ENCODE measurements at regions of chr6 and their contacts with region 1.

Region 1: GRCh38 chr6:30556066-30556905 is at the start of gene GNL1:
- DNase-seq: peak; percentile 95 to 99 (median 99)
- ATAC-seq: peak; percentile 94
- H3K4me3 ChIP-seq: peak within 1 kb of the TSS; percentile 97
- H3K4me3 Mint-ChIP-seq: peak within 1 kb of the TSS; percentile 92 to 100 (median 98)
- H3K27ac ChIP-seq: peak within 1 kb of the TSS; percentile 97
- H3K27ac Mint-ChIP-seq: peak within 1 kb of the TSS; percentile 98 to 100 (median 99)
- H3K4me1 ChIP-seq: peaks cover 8 to 19% of the 10 kb centered on the region in 2 donors
- H3K4me1 Mint-ChIP-seq: peaks cover 25 to 58% (median 45%) of the 10 kb centered on the region in 7 donors
- H3K27me3 ChIP-seq: no peaks in the 10 kb centered on the region
- H3K27me3 Mint-ChIP-seq: no peaks in the 10 kb centered on the region
- total RNA-seq, gene GNL1: 56.0 to 190 (median 73.1) TPM

Region 2: DNA sequence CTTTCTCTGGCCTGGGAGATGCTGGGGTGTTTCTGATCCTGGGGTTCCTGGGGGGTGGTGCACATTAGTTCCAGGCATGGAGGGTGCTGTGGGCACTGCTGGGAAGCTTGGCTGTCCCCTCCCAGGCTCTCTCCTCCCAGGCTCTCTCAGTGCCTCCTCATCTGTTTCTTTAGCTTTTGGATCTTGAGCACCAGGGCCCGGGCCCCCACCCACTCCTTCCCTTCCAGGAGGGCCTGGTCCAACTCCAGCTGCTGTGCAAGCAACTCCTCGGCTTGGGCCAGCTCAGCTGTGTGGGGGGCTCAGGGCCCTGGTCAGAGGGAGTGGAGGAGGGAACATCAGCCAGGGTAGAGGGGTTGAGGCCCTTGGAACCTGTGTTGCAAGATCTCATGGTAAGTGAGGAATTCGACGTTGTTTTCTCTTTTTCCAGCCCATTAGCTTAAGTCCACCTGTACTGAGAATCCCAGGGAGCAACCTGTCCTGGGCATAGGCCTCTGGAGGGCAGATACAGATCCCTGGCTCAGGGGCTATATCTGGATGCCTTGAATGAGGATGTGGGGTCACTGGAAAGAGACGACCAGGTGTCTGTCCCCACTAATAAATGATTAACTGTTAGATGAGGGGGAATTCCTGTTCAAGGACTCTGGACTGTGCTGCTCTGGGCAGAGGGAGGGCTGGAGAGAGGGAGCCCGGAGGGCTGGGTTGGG is 648.5 kb before region 1 on chr6:
- CTCF ChIA-PET with region 1: no interaction called
- POLR2A ChIA-PET with region 1: no interaction called
- intact Hi-C with region 1: no loop called
- DNase-seq: no peak
- ATAC-seq: no peak
- H3K4me3 ChIP-seq: no peak overlapping the region
- H3K4me3 Mint-ChIP-seq: no peak overlapping the region
- H3K27ac ChIP-seq: no peak overlapping the region
- H3K27ac Mint-ChIP-seq: no peak overlapping the region
- H3K4me1 ChIP-seq: no peaks in the 10 kb centered on the region
- H3K4me1 Mint-ChIP-seq: peaks cover 0 to 3% (median 0%) of the 10 kb centered on the region in 7 donors
- H3K27me3 ChIP-seq: no peaks in the 10 kb centered on the region
- H3K27me3 Mint-ChIP-seq: peaks cover 0 to 35% (median 13%) of the 10 kb centered on the region in 5 donors

Region 3: GRCh38 chr6:30212865-30213666 is 343.2 kb before region 1 on chr6 and contains the start of gene TRIM26:
- CTCF ChIA-PET with region 1: no interaction called
- POLR2A ChIA-PET with region 1: no interaction called
- intact Hi-C with region 1: loop called in 1 of 2 experiments (anchors 5 kb)
- DNase-seq: peak; percentile 88 to 99 (median 97)
- ATAC-seq: peak; percentile 94
- H3K4me3 ChIP-seq: peak within 1 kb of the TSS; percentile 83
- H3K4me3 Mint-ChIP-seq: peak within 1 kb of the TSS; percentile 89 to 100 (median 96)
- H3K27ac ChIP-seq: peak within 1 kb of the TSS; percentile 99
- H3K27ac Mint-ChIP-seq: peak within 1 kb of the TSS; percentile 96 to 100 (median 99)
- H3K4me1 ChIP-seq: peaks cover 32 to 39% of the 10 kb centered on the region in 2 donors
- H3K4me1 Mint-ChIP-seq: peaks cover 47 to 62% (median 52%) of the 10 kb centered on the region in 7 donors
- H3K27me3 ChIP-seq: no peaks in the 10 kb centered on the region
- H3K27me3 Mint-ChIP-seq: peaks cover 0 to 5% (median 0%) of the 10 kb centered on the region in 5 donors
- total RNA-seq, gene TRIM26: 40.1 to 73.1 (median 49.1) TPM

Region 4: DNA sequence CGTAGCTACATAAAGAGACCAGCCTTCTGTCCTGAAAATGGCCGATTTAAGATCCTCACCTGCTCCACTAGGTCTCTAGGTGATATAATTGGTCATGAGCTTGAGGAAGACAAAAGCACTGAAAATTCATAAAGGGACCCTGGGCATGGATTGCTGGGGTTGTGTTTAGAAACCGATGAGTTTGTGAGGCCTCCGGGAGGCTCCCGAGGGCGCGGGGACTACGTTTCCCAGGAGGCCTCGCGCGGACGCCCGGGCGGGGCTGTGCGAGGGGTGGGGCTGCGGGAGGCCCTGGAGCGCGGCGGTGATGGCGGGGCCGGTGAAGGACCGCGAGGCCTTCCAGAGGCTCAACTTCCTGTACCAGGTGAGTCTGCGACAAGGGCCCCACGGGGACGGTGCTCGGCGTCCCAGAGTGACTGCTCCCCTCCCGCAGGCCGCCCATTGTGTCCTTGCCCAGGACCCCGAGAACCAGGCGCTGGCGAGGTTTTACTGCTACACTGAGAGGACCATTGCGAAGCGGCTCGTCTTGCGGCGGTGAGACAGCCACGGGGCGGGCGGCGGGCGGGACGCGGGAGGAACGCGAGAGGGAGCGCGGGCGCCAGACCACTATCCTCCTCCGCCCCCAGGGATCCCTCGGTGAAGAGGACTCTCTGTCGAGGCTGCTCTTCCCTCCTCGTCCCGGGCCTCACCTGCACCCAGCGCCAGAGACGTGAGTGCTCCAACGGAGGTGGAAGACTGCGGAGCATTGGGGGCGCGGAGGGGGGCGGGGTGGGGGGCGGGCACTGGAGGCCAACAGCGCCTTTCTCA is 211.2 kb before region 1 on chr6 and contains the start of gene RPP21:
- CTCF ChIA-PET with region 1: no interaction called
- POLR2A ChIA-PET with region 1: no interaction called
- intact Hi-C with region 1: loop called in 1 of 2 experiments (anchors 1 kb)
- DNase-seq: peak; percentile 74 to 91 (median 86)
- ATAC-seq: peak; percentile 99
- H3K4me3 ChIP-seq: peak within 1 kb of the TSS; percentile 77
- H3K4me3 Mint-ChIP-seq: peak within 1 kb of the TSS; percentile 81 to 94 (median 89)
- H3K27ac ChIP-seq: peak within 1 kb of the TSS; percentile 97
- H3K27ac Mint-ChIP-seq: peak within 1 kb of the TSS; percentile 84 to 97 (median 92)
- H3K4me1 ChIP-seq: peaks cover 0 to 12% of the 10 kb centered on the region in 2 donors
- H3K4me1 Mint-ChIP-seq: peaks cover 12 to 32% (median 24%) of the 10 kb centered on the region in 7 donors
- H3K27me3 ChIP-seq: no peaks in the 10 kb centered on the region
- H3K27me3 Mint-ChIP-seq: peaks cover 0 to 7% (median 0%) of the 10 kb centered on the region in 5 donors
- total RNA-seq, gene RPP21: 39.7 to 61.2 (median 44.9) TPM

Region 5: GRCh38 chr6:30515932-30516753 is 40.1 kb before region 1 on chr6:
- CTCF ChIA-PET with region 1: no interaction called
- POLR2A ChIA-PET with region 1: interaction called, 6 read pairs
- intact Hi-C with region 1: loop called (anchors 1 kb)
- DNase-seq: peak; percentile 60 to 97 (median 95)
- ATAC-seq: peak; percentile 93
- H3K4me3 ChIP-seq: peak overlapping the region; percentile 64
- H3K4me3 Mint-ChIP-seq: peak overlapping the region; percentile 82 to 96 (median 89)
- H3K27ac ChIP-seq: peak overlapping the region; percentile 82
- H3K27ac Mint-ChIP-seq: peak overlapping the region; percentile 97 to 100 (median 99)
- H3K4me1 ChIP-seq: peaks cover 20 to 62% of the 10 kb centered on the region in 2 donors
- H3K4me1 Mint-ChIP-seq: peaks cover 31 to 91% (median 62%) of the 10 kb centered on the region in 7 donors
- H3K27me3 ChIP-seq: no peaks in the 10 kb centered on the region
- H3K27me3 Mint-ChIP-seq: no peaks in the 10 kb centered on the region

Region 6: GRCh38 chr6:30646458-30647241 is 90.4 kb after region 1 on chr6 and contains the start of gene C6orf136:
- CTCF ChIA-PET with region 1: no interaction called
- POLR2A ChIA-PET with region 1: interaction called, 3 read pairs
- intact Hi-C with region 1: loop called in 1 of 2 experiments (anchors 1 kb)
- DNase-seq: peak in 8 of 9 donors; percentile 77 to 94 (median 92)
- ATAC-seq: peak; percentile 90
- H3K4me3 ChIP-seq: peak within 1 kb of the TSS; percentile 93
- H3K4me3 Mint-ChIP-seq: peak within 1 kb of the TSS; percentile 82 to 93 (median 88)
- H3K27ac ChIP-seq: peak within 1 kb of the TSS; percentile 91
- H3K27ac Mint-ChIP-seq: peak within 1 kb of the TSS; percentile 79 to 93 (median 91)
- H3K4me1 ChIP-seq: peaks cover 11 to 17% of the 10 kb centered on the region in 2 donors
- H3K4me1 Mint-ChIP-seq: peaks cover 24 to 38% (median 32%) of the 10 kb centered on the region in 7 donors
- H3K27me3 ChIP-seq: no peaks in the 10 kb centered on the region
- H3K27me3 Mint-ChIP-seq: no peaks in the 10 kb centered on the region
- total RNA-seq, gene C6orf136: 23.7 to 38.0 (median 32.1) TPM

Region 7: DNA sequence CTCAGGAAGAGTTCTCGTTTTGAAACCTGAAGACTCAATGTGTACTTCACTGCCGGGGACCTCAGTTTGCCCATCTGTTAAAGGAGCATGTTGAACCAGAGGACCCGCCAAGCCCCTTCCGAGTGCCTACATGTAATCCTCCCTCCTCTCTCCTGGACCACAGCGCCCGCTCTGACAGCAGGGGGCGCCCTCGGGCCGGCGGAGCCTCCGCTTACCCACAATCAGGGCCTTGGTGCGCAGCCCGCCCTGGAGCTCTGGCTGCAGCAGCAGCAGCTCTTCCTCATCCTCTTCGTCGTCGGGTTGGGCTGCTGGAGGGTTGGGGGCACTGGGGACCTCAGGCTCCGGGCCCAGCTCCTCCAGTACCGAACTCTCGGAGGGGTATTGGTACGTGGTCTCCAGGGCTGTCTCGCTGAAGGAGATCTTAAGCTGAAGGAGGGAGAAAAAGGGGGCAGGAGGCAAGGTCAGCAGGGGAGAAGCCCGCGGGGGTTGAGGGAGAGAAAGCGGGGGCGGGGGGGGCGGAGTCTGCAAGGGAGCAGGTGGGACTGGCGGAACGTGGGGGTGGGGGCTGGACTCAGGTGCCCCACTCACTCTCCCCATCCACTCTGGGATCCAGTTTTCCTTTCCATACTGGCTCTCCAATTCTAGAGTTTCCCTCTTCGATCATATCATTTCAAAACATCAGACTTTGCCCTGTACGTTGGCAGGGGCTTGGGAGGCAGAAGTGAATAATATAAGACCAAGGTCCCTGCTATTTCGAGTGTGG is 122.9 kb after region 1 on chr6:
- CTCF ChIA-PET with region 1: no interaction called
- POLR2A ChIA-PET with region 1: interaction called, 4 read pairs
- intact Hi-C with region 1: loop called (anchors 1 to 2 kb)
- DNase-seq: peak; percentile 86 to 97 (median 92)
- ATAC-seq: peak; percentile 65
- H3K4me3 ChIP-seq: peak overlapping the region; percentile 98
- H3K4me3 Mint-ChIP-seq: peak overlapping the region; percentile 90 to 100 (median 97)
- H3K27ac ChIP-seq: peak overlapping the region; percentile 95
- H3K27ac Mint-ChIP-seq: peak overlapping the region; percentile 85 to 99 (median 97)
- H3K4me1 ChIP-seq: peaks cover 5 to 24% of the 10 kb centered on the region in 2 donors
- H3K4me1 Mint-ChIP-seq: peaks cover 20 to 47% (median 38%) of the 10 kb centered on the region in 7 donors
- H3K27me3 ChIP-seq: no peaks in the 10 kb centered on the region
- H3K27me3 Mint-ChIP-seq: no peaks in the 10 kb centered on the region